ENCODE measurements at regions of chr20 and their contacts with region 1.

Region 1: DNA sequence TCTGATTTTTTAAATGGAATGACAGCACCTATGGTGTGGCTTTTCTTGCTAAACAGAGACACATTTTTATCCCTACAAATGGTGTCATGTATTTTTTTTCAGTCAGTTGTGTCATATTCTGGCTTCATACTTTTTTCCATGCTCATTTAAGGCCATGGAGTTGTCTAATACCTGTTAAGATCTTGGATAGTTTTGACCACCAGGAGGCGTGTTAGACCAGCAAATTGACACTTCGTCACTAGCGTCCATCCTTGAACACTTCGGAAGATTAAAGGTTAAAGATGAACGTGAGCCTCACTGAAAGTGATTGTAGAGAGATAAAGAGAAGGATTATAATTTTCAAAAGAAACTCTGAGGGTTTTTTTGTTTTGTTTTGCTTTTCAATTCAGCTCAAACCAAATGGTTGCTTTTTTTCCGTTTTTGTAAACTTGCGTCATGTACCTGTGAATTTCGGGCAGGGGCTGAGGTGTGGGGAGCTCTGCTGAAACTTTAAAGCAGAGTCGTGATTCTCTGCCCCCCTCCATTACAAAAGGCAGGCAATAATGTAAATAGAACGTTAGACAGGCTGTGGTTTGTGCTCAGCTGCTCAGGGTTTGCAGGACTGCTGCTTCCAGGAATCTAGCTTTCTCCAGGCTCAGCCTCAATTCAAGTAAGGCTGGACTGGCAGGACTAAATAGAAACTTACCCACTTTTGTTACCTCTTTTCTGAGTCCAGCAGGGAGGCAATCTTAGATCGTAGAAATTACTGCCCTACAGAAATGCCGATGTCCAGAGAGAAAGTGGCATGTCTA is 245.1 kb downstream of the FOXA2 start:
- DNase-seq: peak in 1 of 3 donors; percentile 89
- ATAC-seq: peak; percentile 68
- H3K4me3 ChIP-seq: no peak overlapping the region
- H3K4me1 ChIP-seq: no peaks in the 10 kb centered on the region
- CTCF ChIP-seq: peak; percentile 35

Region 2: DNA sequence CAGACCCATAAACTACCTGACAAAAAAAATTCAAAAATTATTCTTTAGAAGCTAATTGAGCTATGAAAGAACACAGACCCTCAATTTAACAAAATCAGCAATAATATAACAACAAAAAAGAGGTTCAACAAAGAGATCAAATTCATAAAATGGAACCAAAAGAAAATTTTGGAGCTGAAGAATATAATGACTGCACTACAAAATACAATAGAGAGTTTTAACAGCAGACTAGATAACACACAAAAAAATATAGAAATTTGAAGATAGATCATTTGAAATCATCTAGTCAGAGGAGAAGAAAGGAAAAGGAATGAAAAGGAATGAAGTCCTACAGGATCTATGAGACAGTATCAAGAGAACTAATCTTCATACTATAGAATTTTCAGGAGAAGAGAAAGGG is 211.7 kb before region 1 on chr20:
- intact Hi-C with region 1: no loop called
- DNase-seq: no peak
- ATAC-seq: no peak
- H3K4me3 ChIP-seq: no peak overlapping the region
- H3K4me1 ChIP-seq: no peaks in the 10 kb centered on the region
- CTCF ChIP-seq: no peak

Region 3: DNA sequence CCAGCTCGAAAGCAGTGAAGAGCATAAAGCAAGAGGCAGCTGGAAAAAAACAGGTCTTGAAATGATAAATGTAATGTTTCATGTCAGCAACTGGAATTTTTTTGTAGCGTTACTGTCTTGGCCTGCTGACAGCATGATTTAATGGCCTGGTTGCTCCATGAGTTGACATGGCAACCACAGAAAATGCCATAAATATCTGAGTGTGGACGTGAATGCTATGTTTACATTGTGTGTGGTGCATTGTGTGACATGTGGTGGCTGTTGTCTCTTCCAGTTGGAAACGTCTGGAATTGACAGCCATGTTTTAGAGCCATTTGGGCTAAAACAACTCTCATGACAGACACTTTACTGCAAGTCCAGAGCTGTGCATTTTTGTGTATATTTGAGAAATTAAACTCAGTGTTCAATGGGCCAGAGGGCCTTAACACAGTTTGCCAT is 75.0 kb after region 1 on chr20:
- intact Hi-C with region 1: no loop called
- DNase-seq: no peak
- ATAC-seq: no peak
- H3K4me3 ChIP-seq: no peak overlapping the region
- H3K4me1 ChIP-seq: no peaks in the 10 kb centered on the region
- CTCF ChIP-seq: no peak

Region 4: DNA sequence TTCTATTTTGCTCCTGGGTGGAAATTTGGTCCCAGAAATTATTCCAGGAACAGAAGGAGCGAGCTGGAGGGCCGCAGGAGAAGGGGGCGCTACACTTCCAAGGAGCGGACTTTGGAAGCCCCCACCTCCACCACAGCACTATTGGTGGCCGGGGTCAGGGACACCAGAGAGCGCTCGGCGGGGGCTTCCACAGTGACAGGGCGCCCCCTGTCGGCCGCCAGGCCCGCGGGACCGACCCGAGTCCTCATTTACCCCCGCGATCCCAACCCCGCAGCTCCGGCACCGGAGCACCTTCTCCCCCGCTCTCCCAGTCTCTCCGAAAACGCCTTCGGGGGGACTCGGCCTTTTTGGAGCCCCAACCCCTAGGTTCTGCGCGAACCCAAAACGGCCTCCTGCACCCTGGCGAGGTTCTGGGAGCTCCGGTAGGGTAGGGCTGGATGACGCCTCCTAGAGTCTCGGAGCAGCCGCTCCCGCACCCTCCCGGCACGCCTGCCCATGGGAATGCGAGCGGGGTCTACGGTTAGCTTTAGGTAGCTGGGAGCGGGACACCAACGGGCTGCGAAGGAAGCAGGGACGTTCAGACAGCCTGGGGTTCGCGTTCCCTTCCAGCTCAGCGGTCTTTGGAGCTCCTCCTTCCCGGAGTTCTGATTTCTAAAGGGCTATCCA is 247.5 kb after region 1 on chr20:
- intact Hi-C with region 1: loop called in 1 of 2 experiments (anchors 2 kb)
- DNase-seq: peak; percentile 66 to 88 (median 85)
- ATAC-seq: peak; percentile 16
- H3K4me3 ChIP-seq: no peak overlapping the region
- H3K4me1 ChIP-seq: peaks cover 7% of the 10 kb centered on the region
- CTCF ChIP-seq: peak; percentile 73

Region 5: DNA sequence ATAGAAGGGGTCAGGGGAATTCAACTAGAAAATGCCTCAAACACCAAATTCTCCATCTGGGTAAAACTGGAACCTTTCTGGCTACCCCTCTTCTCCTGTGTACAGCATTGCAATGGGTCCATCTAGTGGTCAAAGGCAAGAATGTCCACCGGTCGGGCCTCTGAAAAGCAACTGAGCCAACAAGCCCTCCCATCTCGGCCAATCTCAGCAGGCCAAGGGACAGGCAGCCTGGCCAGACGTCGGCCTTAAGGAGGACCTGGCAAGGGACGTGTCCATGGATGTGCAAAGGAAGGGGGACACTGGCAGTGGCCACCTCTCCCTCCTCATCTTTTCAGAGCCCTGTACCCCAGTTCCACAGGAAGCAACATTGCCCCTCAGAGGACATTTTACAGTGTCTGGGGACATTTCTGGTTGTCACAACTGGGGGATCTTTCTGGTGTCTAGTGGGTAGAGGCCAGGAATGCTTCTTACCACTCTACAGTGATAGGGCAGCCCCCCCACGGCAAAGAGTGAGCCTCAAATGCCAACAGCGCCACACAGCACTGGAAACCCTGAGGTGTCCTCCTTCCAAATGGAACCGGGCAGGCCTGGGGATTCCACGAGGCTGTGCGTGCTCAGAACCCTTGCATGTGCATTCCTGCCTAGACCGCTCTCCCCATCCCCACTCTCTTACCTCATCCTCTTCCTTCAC is 344.9 kb after region 1 on chr20:
- intact Hi-C with region 1: loop called (anchors 2 to 5 kb)
- DNase-seq: peak in 2 of 3 donors; percentile 70 to 78
- ATAC-seq: peak; percentile 82
- H3K4me3 ChIP-seq: no peak overlapping the region
- H3K4me1 ChIP-seq: no peaks in the 10 kb centered on the region
- CTCF ChIP-seq: peak; percentile 58